Naive thymus-derived CD4-positive, alpha-beta T cell (primary cell): ENCODE measurements at regions of chr15 and their contacts with region 1.

Region 1: DNA sequence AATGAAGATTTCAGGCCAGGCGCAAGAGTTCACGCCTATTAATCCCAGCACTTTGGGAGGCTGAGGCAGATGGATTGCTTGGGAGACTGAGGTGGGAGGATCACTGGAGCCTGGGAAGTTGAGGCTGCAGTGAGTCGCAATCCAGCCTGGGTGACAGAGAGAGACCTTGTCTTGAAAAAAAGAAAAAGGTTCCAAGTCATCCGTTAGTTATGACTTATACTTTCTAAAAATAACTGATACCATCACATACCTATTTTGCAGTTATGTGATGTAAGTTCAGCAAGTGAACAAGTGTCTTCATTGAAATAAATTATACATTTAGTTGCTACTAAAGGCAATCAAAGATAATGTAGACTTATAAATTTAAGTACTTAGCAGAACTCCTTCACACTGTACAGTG is 22.1 kb downstream of the CLPX start:
- DNase-seq: no peak
- ATAC-seq: no peak
- H3K4me3 ChIP-seq: no peak overlapping the region
- H3K4me3 Mint-ChIP-seq: no peak overlapping the region
- H3K27ac ChIP-seq: no peak overlapping the region
- H3K27ac Mint-ChIP-seq: peak overlapping the region in 1 of 9 donors; percentile 33
- H3K4me1 ChIP-seq: no peaks in the 10 kb centered on the region
- H3K4me1 Mint-ChIP-seq: peaks cover 1 to 22% (median 9%) of the 10 kb centered on the region in 7 donors
- H3K27me3 ChIP-seq: no peaks in the 10 kb centered on the region
- H3K27me3 Mint-ChIP-seq: no peaks in the 10 kb centered on the region

Region 2: DNA sequence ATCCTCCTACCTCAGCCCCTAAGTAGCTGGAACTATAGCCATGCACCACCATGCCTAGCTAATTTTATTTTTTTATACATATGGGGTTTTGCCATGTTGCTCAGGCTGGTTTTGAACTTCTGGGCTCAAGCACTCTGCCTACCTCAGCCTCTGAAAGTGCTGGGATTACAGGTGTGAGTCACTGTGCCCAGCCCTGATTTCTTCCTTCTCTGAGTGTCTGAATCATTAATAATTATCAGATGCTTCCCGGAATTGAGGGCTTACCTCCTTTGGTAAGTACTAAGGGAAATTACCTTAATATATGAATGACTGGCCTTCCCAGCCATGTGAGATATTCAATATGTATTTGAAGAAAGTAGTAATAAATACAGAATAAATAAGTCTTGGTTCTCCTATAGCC is 14.9 kb after region 1 on chr15:
- CTCF ChIA-PET with region 1: no interaction called
- POLR2A ChIA-PET with region 1: no interaction called
- intact Hi-C with region 1: loop called in 1 of 2 experiments (anchors 2 kb)
- DNase-seq: no peak
- ATAC-seq: no peak
- H3K4me3 ChIP-seq: no peak overlapping the region
- H3K4me3 Mint-ChIP-seq: no peak overlapping the region
- H3K27ac ChIP-seq: no peak overlapping the region
- H3K27ac Mint-ChIP-seq: peak overlapping the region in 1 of 9 donors; percentile 26
- H3K4me1 ChIP-seq: peaks cover 0 to 4% of the 10 kb centered on the region in 2 donors
- H3K4me1 Mint-ChIP-seq: peaks cover under 1 to 44% (median 41%) of the 10 kb centered on the region in 7 donors
- H3K27me3 ChIP-seq: no peaks in the 10 kb centered on the region
- H3K27me3 Mint-ChIP-seq: no peaks in the 10 kb centered on the region